HepG2 (cell line): ENCODE measurements at regions of chr5 and their contacts with region 1.

Region 1: DNA sequence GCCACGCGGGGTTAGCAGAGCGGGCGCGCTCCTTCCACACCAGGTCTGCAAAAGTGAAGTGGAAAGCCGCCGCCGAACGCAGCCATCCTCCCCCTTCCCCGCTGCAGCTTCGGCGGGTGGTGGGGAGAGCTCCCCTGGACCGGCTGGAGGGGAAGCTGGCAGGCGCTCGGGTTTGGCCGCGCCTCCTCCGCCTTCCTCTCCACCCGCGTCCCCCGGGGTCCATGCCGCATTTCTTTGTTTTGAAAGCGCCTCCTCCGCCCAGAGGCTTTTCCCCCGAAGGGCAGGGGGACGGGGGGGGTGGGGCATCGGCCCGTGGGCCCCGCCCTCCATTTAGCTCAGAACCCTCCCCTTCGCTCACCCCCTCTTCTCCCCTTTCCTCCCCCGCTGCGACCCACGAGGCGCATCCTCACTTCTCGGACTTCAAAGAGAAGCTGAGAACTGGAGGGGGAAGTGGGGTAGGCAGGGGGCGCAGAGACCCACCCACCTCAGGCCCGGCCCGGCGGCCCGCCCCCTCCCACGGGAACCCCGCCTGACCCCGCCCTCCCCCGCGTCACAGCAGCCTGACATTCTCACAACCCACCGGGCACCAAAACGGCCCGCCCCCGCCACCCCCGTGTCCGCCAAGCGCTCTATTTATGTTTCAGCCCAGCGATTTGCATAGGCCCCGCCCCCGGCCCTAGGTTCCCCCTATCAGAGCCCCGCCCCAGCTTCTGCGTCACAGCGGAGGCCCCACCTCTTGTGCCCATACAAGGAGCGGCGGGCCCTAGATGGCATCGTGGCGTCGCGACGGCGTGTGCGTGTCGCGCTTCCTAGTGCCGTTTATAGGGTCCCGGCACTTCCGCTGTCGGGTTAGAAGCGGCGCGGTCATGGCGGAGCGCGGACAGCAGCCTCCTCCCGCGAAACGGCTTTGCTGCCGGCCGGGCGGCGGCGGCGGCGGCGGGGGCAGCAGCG is at the start of gene ZSWIM6:
- DNase-seq: peak; percentile 85
- ATAC-seq: peak; percentile 64
- H3K4me3 ChIP-seq: peak within 1 kb of the TSS; percentile 79 to 87 (median 82)
- H3K27ac ChIP-seq: peak within 1 kb of the TSS; percentile 43
- H3K4me1 ChIP-seq: peaks cover 50% of the 10 kb centered on the region
- H3K27me3 ChIP-seq: peaks cover 0 to 38% of the 10 kb centered on the region in 2 experiments; a peak in 3 of 5 replicates
- CTCF ChIP-seq: no peak
- EP300 ChIP-seq: no peak
- POLR2A ChIP-seq: peak; percentile 76 to 81
- RAD21 ChIP-seq: no peak
- total RNA-seq, gene ZSWIM6: 0.82 and 0.83 TPM in 2 replicates

Region 2: GRCh38 chr5:61055434-61056006 is 276.2 kb before region 1 on chr5:
- CTCF ChIA-PET with region 1: no interaction called
- POLR2A ChIA-PET with region 1: no interaction called
- in situ Hi-C with region 1: no loop called
- intact Hi-C with region 1: loop called (anchors 10 kb)
- DNase-seq: peak; percentile 28
- ATAC-seq: peak; percentile 45; the same call in 1 of the 3 replicates
- H3K4me3 ChIP-seq: no peak overlapping the region
- H3K27ac ChIP-seq: no peak overlapping the region
- H3K4me1 ChIP-seq: peaks cover 7% of the 10 kb centered on the region; the same call in 1 of the 2 replicates
- H3K27me3 ChIP-seq: no peaks in the 10 kb centered on the region
- CTCF ChIP-seq: peak; percentile 71
- EP300 ChIP-seq: no peak
- POLR2A ChIP-seq: no peak
- RAD21 ChIP-seq: peak; percentile 44

Region 3: DNA sequence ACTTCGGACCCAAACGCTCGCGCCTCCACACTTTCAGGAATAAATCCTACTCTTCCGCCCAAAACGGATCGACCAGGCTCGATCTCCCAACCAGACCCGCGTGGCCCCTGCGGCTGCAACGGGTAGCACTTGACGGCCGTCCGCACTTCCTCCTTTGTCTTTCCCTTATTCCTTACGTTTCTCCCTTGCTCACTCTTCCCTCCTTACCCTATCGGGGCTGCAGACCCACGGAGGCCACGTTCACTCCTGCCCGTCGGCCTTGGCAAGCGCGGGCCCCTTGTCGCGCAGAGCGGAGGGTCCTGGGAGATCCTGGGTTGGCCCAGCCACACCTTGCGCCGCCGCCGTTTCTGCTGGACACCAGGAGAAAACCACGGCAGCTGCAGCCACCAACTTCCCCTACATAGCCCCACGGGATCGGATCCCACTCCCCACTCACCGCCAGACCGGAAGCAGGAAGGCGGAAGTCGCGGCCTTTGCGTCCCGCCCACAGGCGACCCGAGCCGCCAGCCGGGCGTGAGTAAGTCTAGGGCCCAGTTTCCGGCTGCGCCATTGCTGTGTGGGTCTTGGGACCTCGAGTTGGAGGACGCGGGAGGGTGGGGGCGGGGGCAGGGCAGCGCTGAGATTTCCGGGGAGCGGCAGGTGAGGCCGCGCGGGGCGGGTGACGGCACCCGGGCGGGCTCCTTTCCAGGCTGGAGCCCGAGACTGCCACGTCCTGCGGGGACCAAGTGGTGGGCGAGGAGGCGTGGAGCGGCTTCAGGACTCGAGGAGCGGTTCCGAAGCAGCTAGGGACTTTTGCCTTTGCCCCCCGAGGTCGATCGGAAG is 169.5 kb before region 1 on chr5 and contains the start of gene SMIM15:
- CTCF ChIA-PET with region 1: no interaction called
- POLR2A ChIA-PET with region 1: interaction called, 3 read pairs
- in situ Hi-C with region 1: no loop called
- intact Hi-C with region 1: loop called (anchors 2 kb)
- DNase-seq: peak; percentile 90
- ATAC-seq: peak; percentile 97
- H3K4me3 ChIP-seq: peak within 1 kb of the TSS; percentile 89 to 93 (median 90)
- H3K27ac ChIP-seq: peak within 1 kb of the TSS; percentile 95
- H3K4me1 ChIP-seq: peaks cover 37% of the 10 kb centered on the region
- H3K27me3 ChIP-seq: no peaks in the 10 kb centered on the region; a peak in 1 of 5 replicates
- CTCF ChIP-seq: no peak
- EP300 ChIP-seq: peak in 1 of 2 experiments; percentile 48; a peak in 2 of 4 replicates
- POLR2A ChIP-seq: peak; percentile 68 to 91; a peak in 3 of 4 replicates
- RAD21 ChIP-seq: no peak
- total RNA-seq, gene SMIM15: 58.2 and 74.4 TPM in 2 replicates

Region 4: DNA sequence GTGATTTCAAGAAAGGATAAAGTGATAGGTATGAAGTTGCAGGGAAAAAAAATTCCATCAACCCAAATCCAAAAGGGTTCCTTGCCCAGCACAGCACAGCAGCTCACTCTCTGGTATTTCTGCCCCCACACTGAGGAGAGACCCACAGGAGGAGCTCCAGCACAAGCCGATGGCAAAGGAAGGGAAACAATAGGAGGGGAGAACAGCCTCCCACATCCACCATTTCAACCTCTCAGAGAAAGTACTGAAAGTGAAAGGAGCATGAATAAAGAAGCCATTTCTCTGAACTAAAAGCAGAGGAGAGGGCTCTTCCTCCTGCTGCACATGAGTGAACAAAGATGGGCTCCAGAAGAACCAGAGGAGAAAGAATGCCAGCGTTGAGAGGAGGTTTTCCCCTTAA is 54.5 kb before region 1 on chr5:
- CTCF ChIA-PET with region 1: no interaction called
- POLR2A ChIA-PET with region 1: interaction called, 3 read pairs
- in situ Hi-C with region 1: no loop called
- intact Hi-C with region 1: loop called (anchors 1 kb)
- DNase-seq: peak; percentile 18
- ATAC-seq: peak; percentile 86
- H3K4me3 ChIP-seq: peak overlapping the region in 1 of 3 experiments; percentile 28; a peak in 2 of 6 replicates
- H3K27ac ChIP-seq: no peak overlapping the region
- H3K4me1 ChIP-seq: no peaks in the 10 kb centered on the region
- H3K27me3 ChIP-seq: no peaks in the 10 kb centered on the region
- CTCF ChIP-seq: peak; percentile 67
- EP300 ChIP-seq: no peak
- POLR2A ChIP-seq: no peak
- RAD21 ChIP-seq: no peak

Region 5: GRCh38 chr5:61301341-61302199 is 30.1 kb before region 1 on chr5:
- CTCF ChIA-PET with region 1: no interaction called
- POLR2A ChIA-PET with region 1: interaction called, 37 read pairs
- in situ Hi-C with region 1: no loop called
- intact Hi-C with region 1: loop called (anchors 1 kb)
- DNase-seq: peak; percentile 98
- ATAC-seq: peak; percentile 99
- H3K4me3 ChIP-seq: peak overlapping the region; percentile 13 to 61 (median 28); a peak in 3 of 6 replicates
- H3K27ac ChIP-seq: peak overlapping the region; percentile 49
- H3K4me1 ChIP-seq: peaks cover 66% of the 10 kb centered on the region
- H3K27me3 ChIP-seq: no peaks in the 10 kb centered on the region
- CTCF ChIP-seq: no peak
- EP300 ChIP-seq: peak; percentile 83 to 84; a peak in 3 of 4 replicates
- POLR2A ChIP-seq: peak in 1 of 2 experiments; percentile 51; a peak in 2 of 4 replicates
- RAD21 ChIP-seq: no peak

Region 6: GRCh38 chr5:61408476-61409168 is 76.9 kb after region 1 on chr5:
- CTCF ChIA-PET with region 1: no interaction called
- POLR2A ChIA-PET with region 1: interaction called, 5 read pairs
- in situ Hi-C with region 1: no loop called
- intact Hi-C with region 1: loop called (anchors 2 kb)
- DNase-seq: peak; percentile 95
- ATAC-seq: peak; percentile 100
- H3K4me3 ChIP-seq: peak overlapping the region in 2 of 3 experiments; percentile 54 to 55; a peak in 3 of 6 replicates
- H3K27ac ChIP-seq: peak overlapping the region; percentile 40
- H3K4me1 ChIP-seq: peaks cover 11% of the 10 kb centered on the region
- H3K27me3 ChIP-seq: no peaks in the 10 kb centered on the region
- CTCF ChIP-seq: no peak
- EP300 ChIP-seq: 0 out of 4 replicates have a peak, but pooled peaks of 1 of the 2 experiments have one; percentile 17
- POLR2A ChIP-seq: no peak
- RAD21 ChIP-seq: no peak

Region 7: GRCh38 chr5:61658592-61659008 is 326.9 kb after region 1 on chr5:
- CTCF ChIA-PET with region 1: no interaction called
- POLR2A ChIA-PET with region 1: no interaction called
- in situ Hi-C with region 1: no loop called
- intact Hi-C with region 1: loop called (anchors 5 kb)
- DNase-seq: peak; percentile 44
- ATAC-seq: peak; percentile 96
- H3K4me3 ChIP-seq: no peak overlapping the region
- H3K27ac ChIP-seq: no peak overlapping the region
- H3K4me1 ChIP-seq: no peaks in the 10 kb centered on the region
- H3K27me3 ChIP-seq: peaks cover 2 to 29% of the 10 kb centered on the region in 2 experiments; a peak in 2 of 5 replicates
- CTCF ChIP-seq: peak; percentile 91
- EP300 ChIP-seq: no peak
- POLR2A ChIP-seq: no peak
- RAD21 ChIP-seq: no peak